ENCODE measurements at regions of chr12 and their contacts with region 1.

Region 1: GRCh38 chr12:25034676-25035075 is 85.8 kb upstream of the BCAT1 start:
- DNase-seq: no peak
- H3K4me3 ChIP-seq: no peak overlapping the region
- H3K4me3 Mint-ChIP-seq: no peak overlapping the region
- H3K27ac Mint-ChIP-seq: no peak overlapping the region
- H3K4me1 ChIP-seq: no peaks in the 10 kb centered on the region
- H3K4me1 Mint-ChIP-seq: no peaks in the 10 kb centered on the region
- H3K27me3 ChIP-seq: no peaks in the 10 kb centered on the region
- H3K27me3 Mint-ChIP-seq: no peaks in the 10 kb centered on the region
- CTCF ChIP-seq: no peak

Region 2: GRCh38 chr12:25052196-25052913 is 17.7 kb after region 1 on chr12:
- CTCF ChIA-PET with region 1: no interaction called
- POLR2A ChIA-PET with region 1: no interaction called
- intact Hi-C with region 1: loop called (anchors 2 kb)
- DNase-seq: peak; percentile 58 to 60
- H3K4me3 ChIP-seq: peak overlapping the region; percentile 27
- H3K4me3 Mint-ChIP-seq: peak overlapping the region; percentile 56
- H3K27ac Mint-ChIP-seq: peak overlapping the region; percentile 2
- H3K4me1 ChIP-seq: peaks cover 9% of the 10 kb centered on the region; the same call in 1 of the 2 replicates
- H3K4me1 Mint-ChIP-seq: peaks cover 19% of the 10 kb centered on the region
- H3K27me3 ChIP-seq: no peaks in the 10 kb centered on the region
- H3K27me3 Mint-ChIP-seq: no peaks in the 10 kb centered on the region
- CTCF ChIP-seq: no peak